ENCODE measurements at regions of chrX and their contacts with region 1.

Region 1: DNA sequence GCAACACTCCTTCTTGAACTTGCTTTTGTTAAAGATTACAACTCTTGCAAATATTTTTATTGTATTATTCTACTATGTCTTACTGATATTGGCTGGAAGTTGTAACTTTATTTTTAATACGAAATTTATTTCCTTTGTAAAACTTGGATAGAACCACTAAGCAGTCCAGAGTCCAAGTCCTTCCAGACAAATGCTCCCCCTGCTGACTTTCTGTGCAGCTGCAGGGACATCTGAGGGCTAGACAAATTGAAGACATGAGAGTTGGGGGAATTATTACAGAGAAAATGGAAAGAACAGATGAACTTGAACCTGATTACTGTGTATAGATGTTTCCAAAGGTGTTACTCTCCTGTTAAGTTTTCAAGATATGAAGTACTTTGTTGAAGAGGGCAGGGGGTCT is 238.8 kb downstream of the GRIA3 start:
- DNase-seq: peak; percentile 14
- H3K4me3 ChIP-seq: no peak overlapping the region
- H3K27ac ChIP-seq: no peak overlapping the region
- H3K4me1 ChIP-seq: peaks cover 0 to 10% of the 10 kb centered on the region in 2 experiments; a peak in 1 of 4 replicates
- H3K27me3 ChIP-seq: no peaks in the 10 kb centered on the region
- CTCF ChIP-seq: peak; percentile 83
- EP300 ChIP-seq: no peak
- RAD21 ChIP-seq: peak; percentile 76

Region 2: GRCh38 chrX:123282241-123282640 is 140.6 kb before region 1 on chrX:
- CTCF ChIA-PET with region 1: interaction called, 10 read pairs
- POLR2A ChIA-PET with region 1: no interaction called
- DNase-seq: peak; percentile 20
- H3K4me3 ChIP-seq: no peak overlapping the region
- H3K27ac ChIP-seq: no peak overlapping the region
- H3K4me1 ChIP-seq: no peaks in the 10 kb centered on the region; a peak in 2 of 4 replicates
- H3K27me3 ChIP-seq: no peaks in the 10 kb centered on the region
- CTCF ChIP-seq: no peak
- EP300 ChIP-seq: peak in 1 of 2 experiments; percentile 61; a peak in 2 of 4 replicates
- RAD21 ChIP-seq: peak; percentile 55

Region 3: GRCh38 chrX:123504047-123504446 is 81.2 kb after region 1 on chrX:
- CTCF ChIA-PET with region 1: no interaction called
- POLR2A ChIA-PET with region 1: no interaction called
- DNase-seq: no peak
- H3K4me3 ChIP-seq: no peak overlapping the region
- H3K27ac ChIP-seq: no peak overlapping the region
- H3K4me1 ChIP-seq: no peaks in the 10 kb centered on the region
- H3K27me3 ChIP-seq: no peaks in the 10 kb centered on the region
- CTCF ChIP-seq: no peak
- EP300 ChIP-seq: no peak
- RAD21 ChIP-seq: no peak

Measured in SK-N-SH (cell line).